ENCODE measurements at regions of chr11 and their contacts with region 1.

Region 1: GRCh38 chr11:96105197-96105895 is 181.4 kb upstream of the MTMR2 start:
- DNase-seq: no peak
- ATAC-seq: no peak
- H3K4me3 Mint-ChIP-seq: no peak overlapping the region
- H3K27ac Mint-ChIP-seq: no peak overlapping the region
- H3K4me1 Mint-ChIP-seq: peaks cover 2% of the 10 kb centered on the region
- H3K27me3 Mint-ChIP-seq: no peaks in the 10 kb centered on the region
- CTCF ChIP-seq: no peak

Region 2: DNA sequence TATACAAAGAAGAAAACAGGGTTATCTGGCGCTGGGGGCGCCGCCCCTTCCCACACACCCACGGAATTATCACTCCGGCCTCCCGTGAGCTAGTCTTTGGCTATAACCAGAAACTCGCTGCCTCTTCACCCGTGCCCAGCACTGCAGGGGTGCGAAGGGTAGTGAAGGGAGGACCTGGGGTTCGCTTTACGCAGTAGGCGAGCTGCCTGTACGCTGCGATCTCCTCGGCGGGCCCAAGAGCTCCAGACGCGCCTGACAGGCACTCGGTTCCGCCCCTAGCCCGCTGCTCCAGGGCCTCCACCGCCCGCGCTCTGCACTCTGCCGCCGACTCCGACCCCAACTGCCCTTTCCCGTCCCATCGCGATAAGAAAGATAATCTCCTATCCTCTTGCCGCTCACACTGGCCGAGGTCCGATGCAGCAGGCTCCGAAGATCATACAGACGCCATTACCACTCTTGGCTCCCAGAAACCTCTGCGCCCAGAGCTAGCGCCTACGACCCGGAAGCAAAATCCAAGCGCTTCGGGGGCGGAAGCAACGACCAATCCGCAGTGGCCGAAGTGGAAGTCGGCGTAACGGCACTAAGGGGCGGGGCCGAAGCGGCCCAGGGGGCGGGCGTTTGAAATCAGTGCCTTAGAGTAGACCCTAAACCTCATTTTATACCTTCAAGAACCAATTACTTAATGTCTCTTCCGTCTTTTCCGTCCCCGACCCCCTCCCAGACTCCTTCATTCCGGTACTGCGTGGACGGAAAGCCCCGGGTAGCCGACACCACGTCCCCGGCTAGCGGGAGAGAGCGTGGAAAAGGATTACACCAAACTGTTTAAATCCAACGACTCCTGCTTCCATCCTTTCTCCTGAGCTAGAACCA is 1132.0 kb before region 1 on chr11 and contains the starts of genes CWC15 and KDM4D:
- CTCF ChIA-PET with region 1: no interaction called
- POLR2A ChIA-PET with region 1: no interaction called
- intact Hi-C with region 1: no loop called
- DNase-seq: peak; percentile 87
- ATAC-seq: peak; percentile 100
- H3K4me3 Mint-ChIP-seq: peak within 1 kb of the TSS; percentile 99
- H3K27ac Mint-ChIP-seq: peak within 1 kb of the TSS; percentile 95
- H3K4me1 Mint-ChIP-seq: peaks cover 20% of the 10 kb centered on the region
- H3K27me3 Mint-ChIP-seq: no peaks in the 10 kb centered on the region
- CTCF ChIP-seq: no peak
- total RNA-seq, gene CWC15: 69.1 and 69.2 TPM in 2 replicates
- total RNA-seq, gene KDM4D: 0.67 and 0.93 TPM in 2 replicates

Region 3: DNA sequence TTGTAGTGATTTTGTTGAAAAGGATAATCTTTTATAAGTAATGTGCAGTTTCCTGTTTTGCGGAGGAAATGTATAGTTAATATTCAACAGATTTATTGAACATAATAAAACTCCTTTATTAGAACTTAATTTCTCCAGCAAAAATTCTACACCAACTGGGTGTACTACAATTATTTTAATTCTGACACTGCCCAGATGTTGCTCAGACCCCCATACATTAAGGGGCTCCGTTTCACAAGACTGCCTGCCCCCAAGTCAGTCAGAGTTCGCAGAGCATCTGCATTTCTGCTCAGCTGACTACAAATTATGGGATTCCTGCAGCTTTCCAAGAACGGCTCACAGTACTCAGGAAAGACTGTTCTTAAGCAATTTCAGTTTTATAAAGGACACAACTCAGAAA is 308.8 kb before region 1 on chr11:
- CTCF ChIA-PET with region 1: no interaction called
- POLR2A ChIA-PET with region 1: no interaction called
- intact Hi-C with region 1: no loop called
- DNase-seq: no peak
- ATAC-seq: no peak
- H3K4me3 Mint-ChIP-seq: no peak overlapping the region
- H3K27ac Mint-ChIP-seq: no peak overlapping the region
- H3K4me1 Mint-ChIP-seq: peaks cover 26% of the 10 kb centered on the region
- H3K27me3 Mint-ChIP-seq: no peaks in the 10 kb centered on the region
- CTCF ChIP-seq: no peak

Region 4: GRCh38 chr11:95968585-95968984 is 136.8 kb before region 1 on chr11:
- CTCF ChIA-PET with region 1: no interaction called
- POLR2A ChIA-PET with region 1: no interaction called
- intact Hi-C with region 1: no loop called
- DNase-seq: no peak
- ATAC-seq: no peak
- H3K4me3 Mint-ChIP-seq: no peak overlapping the region
- H3K27ac Mint-ChIP-seq: no peak overlapping the region
- H3K4me1 Mint-ChIP-seq: no peaks in the 10 kb centered on the region
- H3K27me3 Mint-ChIP-seq: no peaks in the 10 kb centered on the region
- CTCF ChIP-seq: no peak

Region 5: GRCh38 chr11:96119211-96119610 is 13.9 kb after region 1 on chr11:
- CTCF ChIA-PET with region 1: no interaction called
- POLR2A ChIA-PET with region 1: interaction called, 3 read pairs
- intact Hi-C with region 1: loop called (anchors 2 kb)
- DNase-seq: no peak
- ATAC-seq: no peak
- H3K4me3 Mint-ChIP-seq: no peak overlapping the region
- H3K27ac Mint-ChIP-seq: no peak overlapping the region
- H3K4me1 Mint-ChIP-seq: peaks cover 5% of the 10 kb centered on the region
- H3K27me3 Mint-ChIP-seq: no peaks in the 10 kb centered on the region
- CTCF ChIP-seq: no peak

Region 6: GRCh38 chr11:96188243-96189006 is 83.1 kb after region 1 on chr11:
- CTCF ChIA-PET with region 1: no interaction called
- POLR2A ChIA-PET with region 1: no interaction called
- intact Hi-C with region 1: no loop called
- DNase-seq: no peak
- ATAC-seq: peak; percentile 25
- H3K4me3 Mint-ChIP-seq: peak overlapping the region; percentile 39
- H3K27ac Mint-ChIP-seq: peak overlapping the region; percentile 57
- H3K4me1 Mint-ChIP-seq: peaks cover 69% of the 10 kb centered on the region
- H3K27me3 Mint-ChIP-seq: no peaks in the 10 kb centered on the region
- CTCF ChIP-seq: no peak

Measured in activated B cell treated with CpG ODN at 0.5 μM for 24 hours (primary cell).